Transverse colon (tissue), 4 donors: ENCODE measurements at regions of chr12 and their contacts with region 1.

Region 1: DNA sequence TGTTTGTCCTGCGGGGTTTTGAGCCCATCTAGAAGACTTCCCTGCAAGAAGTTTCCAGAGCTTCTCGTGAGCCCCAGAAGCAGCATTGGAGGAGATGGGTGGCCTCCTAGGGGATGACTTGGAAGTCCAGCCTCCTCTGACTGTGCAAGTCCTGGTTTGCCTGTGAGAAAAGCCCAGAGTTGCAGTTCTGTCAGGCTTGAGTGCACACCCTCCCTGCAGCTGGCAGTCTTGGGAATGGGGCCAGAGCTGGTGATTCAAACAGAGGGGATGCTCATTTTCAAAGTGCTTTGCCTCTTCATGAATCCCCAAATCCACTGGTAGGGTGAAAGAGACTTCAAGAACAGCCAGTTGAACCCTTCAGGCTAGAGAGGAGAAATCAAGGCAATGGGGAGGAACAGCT is 3.9 kb upstream of the PPP1R1A start:
- DNase-seq: no peak
- H3K4me3 ChIP-seq: no peak overlapping the region
- H3K27ac ChIP-seq: no peak overlapping the region
- H3K4me1 ChIP-seq: peaks cover 3 to 15% (median 9%) of the 10 kb centered on the region in 4 donors
- H3K27me3 ChIP-seq: peaks cover 25% of the 10 kb centered on the region
- CTCF ChIP-seq: no peak
- EP300 ChIP-seq: no peak
- POLR2A ChIP-seq: no peak

Region 2: GRCh38 chr12:54622459-54623183 is 30.3 kb after region 1 on chr12:
- in situ Hi-C with region 1: no loop called
- intact Hi-C with region 1: loop called (anchors 2 kb)
- DNase-seq: no peak
- H3K4me3 ChIP-seq: no peak overlapping the region
- H3K27ac ChIP-seq: no peak overlapping the region
- H3K4me1 ChIP-seq: no peaks in the 10 kb centered on the region
- H3K27me3 ChIP-seq: peaks cover 8% of the 10 kb centered on the region
- CTCF ChIP-seq: peak in 1 of 5 experiments; percentile 10
- EP300 ChIP-seq: no peak
- POLR2A ChIP-seq: no peak